Common myeloid progenitor, CD34-positive (primary cell): ENCODE measurements at regions of chr7 and their contacts with region 1.

Region 1: GRCh38 chr7:30276203-30276900 is 8.0 kb upstream of the ZNRF2 start:
- DNase-seq: peak; percentile 71 to 78 (median 77)
- H3K4me3 ChIP-seq: no peak overlapping the region
- H3K27ac ChIP-seq: no peak overlapping the region
- H3K4me1 ChIP-seq: peaks cover 7 to 17% (median 9%) of the 10 kb centered on the region in 4 experiments
- H3K27me3 ChIP-seq: no peaks in the 10 kb centered on the region

Region 2: DNA sequence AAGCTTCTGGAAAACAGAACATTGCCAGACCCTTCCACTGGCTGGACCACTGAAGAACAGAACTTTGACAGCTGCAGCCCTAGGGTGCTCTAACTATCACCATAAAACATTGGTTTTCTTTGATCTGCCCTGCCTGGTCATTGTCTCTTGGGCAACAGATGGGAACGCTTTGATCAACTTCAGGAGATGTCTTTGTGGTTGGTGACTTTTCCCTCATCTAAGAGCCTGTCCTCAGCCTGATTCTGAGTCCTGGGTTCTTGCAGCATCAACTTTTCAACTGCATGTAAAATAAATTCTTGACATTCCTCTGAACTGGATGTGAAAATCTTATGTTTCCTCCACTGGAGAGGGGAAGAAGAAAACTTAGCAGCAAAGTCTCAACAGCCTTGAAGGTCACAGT is 45.1 kb before region 1 on chr7:
- CTCF ChIA-PET with region 1: interaction called, 10 read pairs
- POLR2A ChIA-PET with region 1: no interaction called
- DNase-seq: no peak
- H3K4me3 ChIP-seq: no peak overlapping the region
- H3K27ac ChIP-seq: no peak overlapping the region
- H3K4me1 ChIP-seq: peaks cover 0 to 8% (median 5%) of the 10 kb centered on the region in 4 experiments
- H3K27me3 ChIP-seq: peaks cover 0 to 4% (median 2%) of the 10 kb centered on the region in 5 experiments

Region 3: GRCh38 chr7:30352169-30352568 is 75.8 kb after region 1 on chr7:
- CTCF ChIA-PET with region 1: interaction called, 13 read pairs
- POLR2A ChIA-PET with region 1: no interaction called
- DNase-seq: no peak
- H3K4me3 ChIP-seq: no peak overlapping the region
- H3K27ac ChIP-seq: no peak overlapping the region
- H3K4me1 ChIP-seq: peaks cover 19 to 60% (median 31%) of the 10 kb centered on the region in 4 experiments
- H3K27me3 ChIP-seq: no peaks in the 10 kb centered on the region

Region 4: GRCh38 chr7:30412810-30413504 is 136.6 kb after region 1 on chr7:
- CTCF ChIA-PET with region 1: interaction called, 47 read pairs
- POLR2A ChIA-PET with region 1: no interaction called
- DNase-seq: peak; percentile 47 to 69 (median 69)
- H3K4me3 ChIP-seq: no peak overlapping the region
- H3K27ac ChIP-seq: no peak overlapping the region
- H3K4me1 ChIP-seq: peaks cover 0 to 3% (median 0%) of the 10 kb centered on the region in 4 experiments
- H3K27me3 ChIP-seq: no peaks in the 10 kb centered on the region

Region 5: GRCh38 chr7:30564243-30564892 is 288.0 kb after region 1 on chr7:
- CTCF ChIA-PET with region 1: interaction called, 45 read pairs
- POLR2A ChIA-PET with region 1: no interaction called
- DNase-seq: peak; percentile 76 to 87 (median 79)
- H3K4me3 ChIP-seq: no peak overlapping the region
- H3K27ac ChIP-seq: no peak overlapping the region
- H3K4me1 ChIP-seq: no peaks in the 10 kb centered on the region
- H3K27me3 ChIP-seq: no peaks in the 10 kb centered on the region